PC-9 (cell line): ENCODE measurements at regions of chr9 and their contacts with region 1.

Region 1: DNA sequence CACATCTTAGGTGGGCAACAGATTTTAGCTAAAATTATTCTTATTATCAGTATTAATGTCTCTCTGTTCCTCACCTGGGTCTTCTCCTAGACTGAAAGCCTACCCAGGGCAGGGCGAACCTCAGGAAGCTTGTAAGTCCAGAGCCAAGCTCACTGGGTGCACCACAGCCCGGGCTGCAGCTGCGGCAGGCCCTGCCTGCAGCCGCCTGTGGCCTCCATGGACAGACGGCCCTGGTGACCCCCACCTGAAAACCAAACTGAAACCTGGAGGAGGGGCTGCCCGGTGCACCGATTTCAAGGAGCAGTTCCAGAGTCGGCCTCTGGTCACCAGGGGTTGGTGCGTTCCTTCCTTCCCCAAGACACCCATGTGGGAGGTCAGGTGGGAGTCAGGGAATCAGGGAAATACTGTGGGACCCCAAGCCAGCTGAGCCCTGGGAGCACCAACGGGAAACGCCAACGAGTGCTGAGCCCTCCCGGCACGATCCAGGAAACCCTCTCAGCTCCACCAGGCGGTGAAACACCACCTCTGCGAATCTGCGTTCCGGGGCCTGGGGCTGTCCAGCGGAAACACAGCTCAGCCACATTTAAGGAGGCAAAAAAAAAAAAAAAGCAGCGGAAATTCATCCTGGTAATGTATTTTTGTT is 68.6 kb upstream of the PPP1R26 start:
- DNase-seq: no peak
- H3K4me3 ChIP-seq: no peak overlapping the region
- H3K27ac ChIP-seq: no peak overlapping the region
- H3K4me1 ChIP-seq: peaks cover 8% of the 10 kb centered on the region
- H3K27me3 ChIP-seq: peaks cover 49% of the 10 kb centered on the region
- CTCF ChIP-seq: no peak

Region 2: DNA sequence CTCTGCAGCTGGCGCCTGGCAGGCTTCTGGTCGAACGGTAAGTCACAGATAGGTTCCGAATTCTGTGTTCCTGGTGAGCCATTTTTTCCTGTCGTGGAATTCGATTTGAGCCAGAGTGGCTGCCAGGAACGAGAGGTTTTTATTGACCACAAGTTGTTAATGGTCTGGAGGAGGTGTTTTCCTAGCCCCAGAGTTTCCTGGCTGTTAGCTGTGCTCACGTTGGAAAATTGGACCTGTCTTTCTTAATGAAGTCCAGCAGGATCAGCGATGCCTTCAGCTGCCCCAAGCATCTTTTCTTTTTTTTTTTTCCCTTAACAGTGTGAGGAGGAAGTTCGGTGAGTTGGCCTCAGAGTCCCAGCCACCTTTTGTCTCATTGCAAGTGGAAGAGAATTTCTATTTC is 706.5 kb before region 1 on chr9:
- CTCF ChIA-PET with region 1: no interaction called
- POLR2A ChIA-PET with region 1: no interaction called
- intact Hi-C with region 1: loop called (anchors 5 kb)
- DNase-seq: no peak
- H3K4me3 ChIP-seq: no peak overlapping the region
- H3K27ac ChIP-seq: no peak overlapping the region
- H3K4me1 ChIP-seq: no peaks in the 10 kb centered on the region
- H3K27me3 ChIP-seq: peaks cover 89% of the 10 kb centered on the region
- CTCF ChIP-seq: no peak

Region 3: DNA sequence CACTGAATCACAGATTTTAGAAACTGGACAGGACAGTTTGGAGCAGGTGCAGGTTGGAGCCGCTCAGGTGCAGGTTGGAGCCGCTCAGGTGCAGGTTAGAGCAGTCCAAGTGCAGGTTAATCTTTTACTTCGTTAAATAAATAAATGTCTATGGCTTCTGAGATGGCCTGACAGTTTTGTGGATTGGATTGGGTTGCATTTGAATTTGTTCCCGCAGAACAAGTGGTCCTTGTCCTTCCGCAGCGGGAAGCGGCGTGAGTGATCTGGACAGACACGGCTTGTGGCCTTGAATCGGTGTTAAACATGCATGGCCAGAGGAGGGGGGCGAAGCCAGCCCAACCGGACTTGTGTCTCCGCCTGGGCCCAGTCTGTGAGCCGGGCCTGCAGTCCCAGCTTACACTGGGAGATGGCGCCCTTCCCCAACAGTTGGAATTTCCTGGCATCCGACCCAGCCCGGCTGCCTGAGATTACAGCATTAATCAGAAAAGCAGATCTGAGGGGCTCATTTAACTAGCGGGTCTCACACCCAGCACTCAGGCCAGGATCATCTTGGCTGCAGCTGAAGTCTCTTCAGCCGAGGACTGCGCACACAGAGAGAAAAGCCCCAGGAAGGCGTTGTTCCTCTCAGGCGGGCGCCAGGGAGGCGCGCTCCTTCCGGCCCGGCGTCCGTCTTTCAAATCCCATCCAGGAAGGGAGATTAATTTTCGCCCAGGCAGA is 325.0 kb before region 1 on chr9:
- CTCF ChIA-PET with region 1: interaction called, 6 read pairs
- POLR2A ChIA-PET with region 1: no interaction called
- intact Hi-C with region 1: loop called (anchors 1 kb)
- DNase-seq: peak; percentile 38 to 67
- H3K4me3 ChIP-seq: no peak overlapping the region
- H3K27ac ChIP-seq: no peak overlapping the region
- H3K4me1 ChIP-seq: no peaks in the 10 kb centered on the region
- H3K27me3 ChIP-seq: peaks cover 75% of the 10 kb centered on the region
- CTCF ChIP-seq: peak; percentile 81